Transverse colon (tissue), 4 donors: ENCODE measurements at regions of chr5 and their contacts with region 1.

Region 1: DNA sequence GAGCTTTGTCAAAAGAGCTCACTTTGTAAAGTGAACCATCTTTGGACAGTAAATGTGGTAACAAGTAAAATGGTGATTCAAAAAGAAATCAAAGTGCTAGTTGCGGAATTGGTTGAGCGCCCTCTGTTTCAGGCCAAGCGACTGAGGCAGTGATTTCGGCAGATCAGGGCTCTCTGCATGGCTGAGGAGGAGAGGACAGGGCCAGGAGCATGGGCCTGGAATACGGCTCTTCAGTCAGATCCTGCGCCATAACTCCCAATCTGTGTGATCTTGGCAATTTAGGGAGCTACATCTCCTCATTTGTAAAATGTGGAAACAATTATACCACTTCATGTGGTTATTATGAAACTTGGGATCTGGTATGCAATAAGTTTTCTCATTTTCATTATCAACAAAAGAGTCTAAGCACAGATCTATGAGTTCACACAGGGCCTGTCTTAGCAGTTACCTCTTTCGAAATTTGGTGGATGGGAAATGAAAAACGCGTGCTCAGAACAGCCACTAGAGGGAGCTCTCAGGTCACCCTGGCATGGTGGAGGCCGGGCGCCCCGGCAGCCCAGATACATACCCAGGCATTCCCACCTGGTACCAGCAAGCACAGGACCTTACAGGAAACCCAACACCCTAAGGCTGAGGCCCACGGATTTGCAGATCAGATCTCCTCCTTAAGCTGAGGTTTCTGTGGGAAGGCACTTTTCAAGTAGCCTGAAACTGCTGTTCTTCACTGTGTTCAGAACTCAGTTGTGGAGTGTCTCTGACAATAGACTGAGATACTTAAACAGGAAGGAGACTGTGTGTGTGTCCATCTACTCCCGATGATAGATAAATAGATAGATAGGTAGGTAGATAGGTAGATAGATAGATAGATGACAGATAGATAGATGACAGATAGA is 303.7 kb downstream of the RAB3C start:
- DNase-seq: peak; percentile 60
- H3K4me3 ChIP-seq: no peak overlapping the region
- H3K27ac ChIP-seq: no peak overlapping the region
- H3K4me1 ChIP-seq: peaks cover 0 to 3% (median under 1%) of the 10 kb centered on the region in 4 donors
- H3K27me3 ChIP-seq: no peaks in the 10 kb centered on the region
- CTCF ChIP-seq: peak; percentile 70 to 93 (median 90)
- EP300 ChIP-seq: no peak
- POLR2A ChIP-seq: no peak

Region 2: DNA sequence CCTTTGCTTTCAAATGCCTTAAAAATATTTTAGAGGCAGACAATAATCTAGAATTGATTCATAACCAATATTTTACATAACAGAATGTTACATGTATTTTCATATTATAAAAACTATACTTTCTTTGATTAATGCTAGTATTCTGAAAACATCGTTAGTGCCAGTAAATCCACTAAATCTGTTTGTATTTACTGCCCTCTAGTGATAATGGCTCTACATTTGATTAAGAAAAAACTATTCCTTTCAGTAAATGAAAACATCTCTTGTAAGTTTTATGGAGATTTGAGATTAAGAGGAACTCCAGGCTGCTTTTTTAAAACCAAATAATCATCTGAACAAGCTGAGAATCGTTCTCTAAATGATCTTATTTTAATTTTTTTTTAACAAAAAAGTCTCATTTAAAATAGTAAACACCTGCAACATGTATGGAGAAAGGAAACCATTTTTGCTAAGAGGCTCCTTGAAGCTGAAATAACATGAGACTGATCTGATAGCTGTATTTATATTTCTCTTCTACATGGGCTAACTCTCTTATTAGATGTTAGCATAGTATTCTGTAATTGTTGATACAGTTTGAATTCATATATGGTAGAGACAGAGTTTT is 121.0 kb after region 1 on chr5:
- in situ Hi-C with region 1: loop called in 3 of 4 experiments (anchors 10 to 25 kb)
- intact Hi-C with region 1: no loop called
- DNase-seq: no peak
- H3K4me3 ChIP-seq: no peak overlapping the region
- H3K27ac ChIP-seq: no peak overlapping the region
- H3K4me1 ChIP-seq: peaks cover 0 to 18% (median 7%) of the 10 kb centered on the region in 4 donors
- H3K27me3 ChIP-seq: no peaks in the 10 kb centered on the region
- CTCF ChIP-seq: peak in 4 of 5 experiments; percentile 10 to 31 (median 18)
- EP300 ChIP-seq: no peak
- POLR2A ChIP-seq: no peak

Region 3: DNA sequence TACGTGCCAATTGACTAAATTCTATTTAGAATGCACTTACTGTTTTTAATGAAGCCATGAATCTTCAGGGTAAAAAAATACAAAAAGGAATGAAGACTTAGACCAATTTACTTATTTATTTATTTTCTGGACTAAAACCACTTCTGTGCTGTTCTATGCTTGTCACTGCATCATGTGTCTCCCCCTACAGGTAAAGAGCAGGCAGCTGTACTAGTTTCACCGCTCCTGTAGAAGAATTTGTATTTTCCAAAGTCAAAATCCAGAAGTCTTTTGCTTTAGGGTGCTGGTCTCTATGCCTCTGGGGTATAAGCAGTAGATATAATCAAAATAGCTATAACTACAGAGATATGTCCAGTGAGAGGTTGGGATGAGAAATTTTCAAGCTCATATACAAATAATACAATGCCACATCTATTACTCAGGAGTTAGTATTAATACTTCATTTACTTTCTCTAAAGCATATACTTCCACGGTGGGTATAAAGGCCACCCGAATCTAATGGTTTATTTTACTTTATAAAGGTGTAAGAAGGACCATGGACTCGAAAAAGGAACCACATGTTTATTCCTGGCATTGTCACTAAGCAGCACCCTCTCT is 287.8 kb after region 1 on chr5:
- in situ Hi-C with region 1: loop called (anchors 10 kb)
- intact Hi-C with region 1: loop called (anchors 5 kb)
- DNase-seq: no peak
- H3K4me3 ChIP-seq: no peak overlapping the region
- H3K27ac ChIP-seq: no peak overlapping the region
- H3K4me1 ChIP-seq: peaks cover 0 to 4% (median 0%) of the 10 kb centered on the region in 4 donors
- H3K27me3 ChIP-seq: no peaks in the 10 kb centered on the region
- CTCF ChIP-seq: peak; percentile 74 to 80 (median 78)
- EP300 ChIP-seq: no peak
- POLR2A ChIP-seq: no peak

Region 4: DNA sequence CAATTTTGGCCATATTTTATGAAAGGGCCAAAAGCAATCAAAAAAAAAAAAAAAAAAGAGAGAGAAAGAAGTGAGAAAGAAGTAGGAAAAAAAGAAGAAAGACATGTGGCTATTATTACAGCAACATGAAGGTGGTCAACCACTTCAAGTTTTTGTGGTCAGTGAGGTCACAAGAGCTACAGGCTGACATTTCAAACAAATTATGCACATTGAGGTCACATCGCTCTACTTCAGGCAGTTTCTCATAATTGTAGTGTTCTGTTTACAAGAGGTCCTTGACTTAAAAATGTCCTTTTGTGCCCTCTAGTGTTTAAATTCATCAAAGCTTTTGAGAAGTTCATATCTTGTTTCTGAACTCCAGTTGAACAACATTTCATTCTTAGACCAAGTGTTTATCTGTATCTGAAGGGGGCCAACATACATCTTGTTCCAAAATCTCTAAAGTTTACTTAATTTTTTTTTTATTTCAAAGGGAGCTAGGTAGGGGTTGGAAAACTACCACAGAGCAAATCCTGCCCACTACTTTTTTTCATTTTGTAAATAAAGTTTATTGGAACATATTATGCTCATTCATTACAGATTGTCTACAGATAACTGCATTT is 493.9 kb after region 1 on chr5:
- in situ Hi-C with region 1: loop called in 3 of 4 experiments (anchors 25 kb)
- intact Hi-C with region 1: no loop called
- DNase-seq: no peak
- H3K4me3 ChIP-seq: no peak overlapping the region
- H3K27ac ChIP-seq: peak overlapping the region; percentile 15 to 60 (median 34)
- H3K4me1 ChIP-seq: peaks cover 0 to 12% (median 0%) of the 10 kb centered on the region in 4 donors
- H3K27me3 ChIP-seq: no peaks in the 10 kb centered on the region
- CTCF ChIP-seq: peak; percentile 43 to 63 (median 56)
- EP300 ChIP-seq: no peak
- POLR2A ChIP-seq: no peak

Region 5: DNA sequence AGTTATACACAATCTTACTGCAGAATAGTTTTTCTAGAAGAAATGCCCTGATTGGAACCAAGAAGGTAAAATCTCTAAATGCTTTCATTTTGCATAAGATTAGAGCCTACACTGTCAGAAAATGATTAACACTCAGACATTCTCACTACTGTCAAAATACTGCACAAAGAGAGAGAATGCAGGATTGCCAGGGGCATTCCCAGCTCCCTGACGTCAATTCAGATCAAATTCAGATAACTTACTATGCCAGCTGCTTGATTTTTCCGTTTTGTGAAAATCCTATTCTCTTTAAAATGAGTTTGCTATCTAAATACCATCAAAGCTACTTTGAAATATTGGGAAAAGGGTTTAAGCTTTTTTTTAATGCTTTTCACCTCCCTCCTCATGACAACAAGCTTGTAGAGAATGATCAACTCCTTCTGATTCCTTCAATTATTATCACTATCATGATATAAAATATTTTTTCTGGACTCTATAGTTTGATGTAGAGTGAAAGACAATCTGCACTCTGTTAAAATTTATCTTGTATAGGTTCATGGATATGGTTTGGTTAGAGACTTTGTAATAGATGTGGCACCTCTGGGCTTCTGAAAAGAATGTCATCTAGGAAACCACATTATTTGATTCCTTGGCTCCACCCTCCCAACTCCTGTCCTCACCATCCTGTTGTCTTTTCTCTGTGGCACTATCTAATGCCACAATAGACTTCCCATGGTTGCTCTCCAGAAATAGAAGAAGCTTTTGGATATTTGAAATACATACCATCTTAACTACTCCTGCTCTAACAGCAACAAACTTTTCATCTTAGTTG is 599.3 kb after region 1 on chr5:
- in situ Hi-C with region 1: no loop called
- intact Hi-C with region 1: loop called (anchors 5 kb)
- DNase-seq: no peak
- H3K4me3 ChIP-seq: no peak overlapping the region
- H3K27ac ChIP-seq: no peak overlapping the region
- H3K4me1 ChIP-seq: peaks cover 0 to 11% (median 1%) of the 10 kb centered on the region in 4 donors
- H3K27me3 ChIP-seq: no peaks in the 10 kb centered on the region
- CTCF ChIP-seq: no peak
- EP300 ChIP-seq: no peak
- POLR2A ChIP-seq: no peak